Breast epithelium (tissue), 4 donors: ENCODE measurements at regions of chr9 and their contacts with region 1.

Region 1: GRCh38 chr9:127869310-127870152 is 7.9 kb downstream of the AK1 start:
- DNase-seq: peak; percentile 76 to 84
- H3K4me3 ChIP-seq: no peak overlapping the region
- H3K27ac ChIP-seq: peak overlapping the region in 1 of 2 donors; percentile 8
- H3K4me1 ChIP-seq: peaks cover 3 to 10% of the 10 kb centered on the region in 2 donors
- H3K27me3 ChIP-seq: no peaks in the 10 kb centered on the region
- CTCF ChIP-seq: peak; percentile 70 to 94 (median 92)
- POLR2A ChIP-seq: no peak

Region 2: GRCh38 chr9:127651697-127652610 is 217.6 kb before region 1 on chr9:
- intact Hi-C with region 1: no loop called
- DNase-seq: no peak
- H3K4me3 ChIP-seq: no peak overlapping the region
- H3K27ac ChIP-seq: no peak overlapping the region
- H3K4me1 ChIP-seq: no peaks in the 10 kb centered on the region
- H3K27me3 ChIP-seq: no peaks in the 10 kb centered on the region
- CTCF ChIP-seq: no peak
- POLR2A ChIP-seq: no peak

Region 3: GRCh38 chr9:127785023-127785932 is 84.3 kb before region 1 on chr9:
- intact Hi-C with region 1: loop called (anchors 10 kb)
- DNase-seq: peak; percentile 79 to 88
- H3K4me3 ChIP-seq: peak overlapping the region; percentile 96 to 99 (median 98)
- H3K27ac ChIP-seq: peak overlapping the region; percentile 92 to 99
- H3K4me1 ChIP-seq: peaks cover 2 to 9% of the 10 kb centered on the region in 2 donors
- H3K27me3 ChIP-seq: no peaks in the 10 kb centered on the region
- CTCF ChIP-seq: peak; percentile 89 to 97 (median 96)
- POLR2A ChIP-seq: no peak

Region 4: DNA sequence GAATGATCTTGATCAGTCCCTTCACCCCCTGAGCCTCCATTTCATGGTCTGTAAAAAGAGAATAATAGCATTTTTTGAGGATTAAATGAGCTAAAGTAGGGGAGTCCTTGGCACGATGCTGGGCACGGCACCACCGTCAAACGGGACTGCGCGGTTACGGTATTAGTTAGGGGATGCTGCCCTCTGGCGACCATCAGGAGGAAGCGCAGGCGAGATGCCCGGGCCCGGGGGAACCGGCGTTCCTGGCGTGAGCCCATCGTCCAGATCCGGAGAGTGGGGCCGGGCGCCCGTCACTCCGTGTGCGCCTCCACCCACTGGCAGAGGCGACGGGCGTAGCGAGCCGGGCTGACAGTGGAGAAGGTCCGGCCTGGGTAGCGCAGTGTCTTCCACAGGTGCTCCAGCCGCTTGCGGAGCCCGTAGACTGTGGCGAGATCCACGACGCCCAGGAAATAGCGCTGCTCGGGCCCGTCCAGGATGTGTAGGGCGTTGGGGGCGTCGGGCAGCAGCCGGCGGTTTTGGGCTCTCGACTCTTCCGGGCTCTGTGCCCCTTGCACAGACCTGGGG is 52.1 kb after region 1 on chr9:
- intact Hi-C with region 1: loop called (anchors 5 kb)
- DNase-seq: peak in 1 of 2 donors; percentile 79
- H3K4me3 ChIP-seq: peak overlapping the region; percentile 7 to 57 (median 29)
- H3K27ac ChIP-seq: peak overlapping the region in 1 of 2 donors; percentile 21
- H3K4me1 ChIP-seq: peaks cover 6 to 8% of the 10 kb centered on the region in 2 donors
- H3K27me3 ChIP-seq: no peaks in the 10 kb centered on the region
- CTCF ChIP-seq: peak; percentile 73 to 97 (median 95)
- POLR2A ChIP-seq: no peak